Tibial artery (tissue), 4 donors: ENCODE measurements at regions of chrX and their contacts with region 1.

Region 1: GRCh38 chrX:76617020-76617419 is 189.5 kb downstream of the MAGEE1 start:
- DNase-seq: no peak
- H3K4me3 ChIP-seq: no peak overlapping the region
- H3K27ac ChIP-seq: no peak overlapping the region
- H3K4me1 ChIP-seq: no peaks in the 10 kb centered on the region
- H3K27me3 ChIP-seq: no peaks in the 10 kb centered on the region
- CTCF ChIP-seq: no peak

Region 2: GRCh38 chrX:76555814-76556213 is 61.2 kb before region 1 on chrX:
- intact Hi-C with region 1: loop called (anchors 10 kb)
- DNase-seq: no peak
- H3K4me3 ChIP-seq: no peak overlapping the region
- H3K27ac ChIP-seq: no peak overlapping the region
- H3K4me1 ChIP-seq: no peaks in the 10 kb centered on the region
- H3K27me3 ChIP-seq: no peaks in the 10 kb centered on the region
- CTCF ChIP-seq: no peak